Prostate gland (tissue), 2 donors: ENCODE measurements at regions of chr11 and their contacts with region 1.

Region 1: DNA sequence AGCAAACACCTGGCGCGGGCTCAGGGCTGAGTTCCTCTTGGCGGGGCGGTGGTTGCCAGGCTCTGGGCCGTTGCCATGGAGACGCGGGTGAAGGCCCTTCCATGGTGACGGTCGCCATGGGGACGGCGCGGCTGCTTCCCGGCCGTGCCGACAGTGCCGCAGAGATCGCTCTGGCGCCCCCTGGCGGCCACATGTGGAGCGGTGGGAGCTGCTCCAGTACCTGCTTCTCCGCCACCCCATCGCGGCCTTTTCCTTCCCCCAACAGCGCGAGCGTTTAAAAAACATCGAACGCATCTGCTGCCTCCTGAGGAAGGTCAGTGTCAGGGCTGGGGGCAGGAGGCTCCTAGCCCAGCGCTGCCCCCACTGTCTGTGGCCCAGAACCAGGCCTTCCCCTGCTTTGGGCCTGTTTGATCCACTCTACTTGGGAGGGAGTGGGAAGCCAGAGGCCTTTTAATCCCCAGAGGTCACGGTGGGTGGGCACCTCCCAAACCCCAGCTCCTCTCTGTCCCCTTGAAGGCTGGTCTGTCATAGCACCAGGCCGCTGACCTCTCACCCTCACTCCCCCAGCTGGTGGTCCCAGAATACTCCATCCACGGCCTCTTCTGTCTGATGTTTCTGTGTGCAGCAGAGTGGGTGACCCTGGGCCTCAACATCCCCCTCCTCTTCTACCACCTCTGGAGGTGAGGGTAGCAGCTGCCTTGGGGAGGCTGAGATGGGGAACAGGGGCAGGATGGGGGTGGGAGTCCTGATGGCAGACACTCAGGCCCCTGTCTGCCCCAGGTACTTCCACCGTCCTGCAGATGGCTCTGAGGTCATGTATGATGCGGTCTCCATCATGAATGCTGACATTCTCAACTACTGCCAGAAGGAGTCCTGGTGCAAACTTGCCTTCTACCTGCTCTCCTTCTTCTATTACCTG is 4.8 kb downstream of the CNIH2 start:
- DNase-seq: peak; percentile 97
- H3K4me3 ChIP-seq: no peak overlapping the region
- H3K27ac ChIP-seq: no peak overlapping the region
- H3K4me1 ChIP-seq: peaks cover 2% of the 10 kb centered on the region
- H3K27me3 ChIP-seq: no peaks in the 10 kb centered on the region
- CTCF ChIP-seq: peak; percentile 96 to 99 (median 98)
- POLR2A ChIP-seq: no peak

Region 2: DNA sequence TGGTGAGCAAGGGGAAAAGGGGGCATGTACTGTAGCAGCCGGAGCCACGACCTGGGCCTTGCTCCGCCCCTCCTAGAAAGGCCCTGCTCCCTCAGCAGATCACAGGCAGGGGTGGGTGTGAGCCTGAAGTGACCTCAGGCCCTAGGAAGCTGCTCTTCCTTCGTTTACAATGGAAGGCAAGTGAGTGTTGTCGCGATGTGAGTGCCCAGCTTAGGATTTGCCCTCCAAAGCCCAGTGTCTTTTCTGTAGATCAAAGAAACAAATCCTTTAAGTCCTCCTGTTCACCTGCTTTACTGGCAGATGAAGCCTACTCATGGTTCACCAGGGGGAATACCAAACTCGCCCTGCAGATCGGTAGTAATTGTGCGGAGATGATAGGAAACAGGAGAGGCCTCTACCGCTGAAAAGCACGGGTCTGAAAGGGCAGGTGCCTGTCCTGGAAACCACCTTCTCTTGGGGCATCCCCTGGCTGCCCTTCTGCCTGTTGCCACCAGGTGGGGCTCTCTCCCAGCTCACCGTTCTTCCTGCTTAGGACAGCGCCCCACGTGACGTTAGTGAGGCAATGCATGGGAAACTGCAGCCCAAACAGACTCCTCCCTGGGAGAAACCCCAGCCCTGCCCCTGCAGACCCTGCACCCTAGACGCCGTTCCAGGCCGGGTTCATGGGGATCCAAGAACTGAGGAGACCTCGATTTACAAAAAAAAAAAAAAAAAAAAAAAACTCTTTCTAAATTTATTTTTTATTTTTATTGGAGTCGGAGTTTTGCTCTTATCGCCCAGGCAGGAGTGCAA is 60.2 kb before region 1 on chr11:
- intact Hi-C with region 1: loop called (anchors 2 kb)
- DNase-seq: peak; percentile 93
- H3K4me3 ChIP-seq: no peak overlapping the region
- H3K27ac ChIP-seq: no peak overlapping the region
- H3K4me1 ChIP-seq: no peaks in the 10 kb centered on the region
- H3K27me3 ChIP-seq: no peaks in the 10 kb centered on the region
- CTCF ChIP-seq: peak; percentile 94 to 100 (median 98)
- POLR2A ChIP-seq: no peak